ENCODE measurements at regions of chr10 and their contacts with region 1.

Region 1: GRCh38 chr10:25959540-25960232 is 25.7 kb downstream of the MYO3A start:
- DNase-seq: no peak
- H3K4me3 Mint-ChIP-seq: no peak overlapping the region
- H3K27ac Mint-ChIP-seq: no peak overlapping the region
- H3K4me1 Mint-ChIP-seq: no peaks in the 10 kb centered on the region
- H3K27me3 Mint-ChIP-seq: no peaks in the 10 kb centered on the region

Region 2: DNA sequence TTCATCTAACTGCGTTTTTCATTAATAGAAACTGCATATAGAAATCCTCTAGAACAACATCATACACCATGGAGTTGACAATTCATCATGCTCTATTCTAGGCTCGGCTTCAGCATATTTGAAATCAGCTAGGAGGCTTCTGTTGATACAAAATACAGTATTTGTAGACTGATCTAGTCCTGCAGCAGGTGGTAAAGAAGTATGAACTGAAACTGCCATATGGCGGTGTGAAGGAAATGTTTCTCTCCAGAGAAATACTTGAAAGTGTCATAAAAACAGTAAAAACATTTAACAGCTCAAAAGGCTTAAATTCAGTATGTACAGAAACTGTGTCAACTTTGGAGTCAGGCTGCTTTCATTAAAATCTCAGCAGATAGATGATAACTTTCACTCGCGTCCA is 57.7 kb before region 1 on chr10:
- intact Hi-C with region 1: loop called (anchors 2 kb)
- DNase-seq: no peak
- H3K4me3 Mint-ChIP-seq: no peak overlapping the region
- H3K27ac Mint-ChIP-seq: no peak overlapping the region
- H3K4me1 Mint-ChIP-seq: no peaks in the 10 kb centered on the region
- H3K27me3 Mint-ChIP-seq: no peaks in the 10 kb centered on the region